HCT116 (cell line): ENCODE measurements at regions of chr1 and their contacts with region 1.

Region 1: GRCh38 chr1:234114648-234115307 is 210.3 kb downstream of the SLC35F3 start:
- DNase-seq: peak; percentile 21
- ATAC-seq: peak; percentile 72
- H3K4me3 ChIP-seq: no peak overlapping the region
- H3K27ac ChIP-seq: no peak overlapping the region
- H3K4me1 ChIP-seq: 0 out of 4 replicates have a peak, but pooled peaks cover 0 to 4% of the 10 kb centered on the region in 2 experiments
- H3K27me3 ChIP-seq: no peaks in the 10 kb centered on the region
- CTCF ChIP-seq: peak; percentile 57 to 78 (median 61); a peak in 5 of 6 replicates
- POLR2A ChIP-seq: no peak
- RAD21 ChIP-seq: peak; percentile 76

Region 2: DNA sequence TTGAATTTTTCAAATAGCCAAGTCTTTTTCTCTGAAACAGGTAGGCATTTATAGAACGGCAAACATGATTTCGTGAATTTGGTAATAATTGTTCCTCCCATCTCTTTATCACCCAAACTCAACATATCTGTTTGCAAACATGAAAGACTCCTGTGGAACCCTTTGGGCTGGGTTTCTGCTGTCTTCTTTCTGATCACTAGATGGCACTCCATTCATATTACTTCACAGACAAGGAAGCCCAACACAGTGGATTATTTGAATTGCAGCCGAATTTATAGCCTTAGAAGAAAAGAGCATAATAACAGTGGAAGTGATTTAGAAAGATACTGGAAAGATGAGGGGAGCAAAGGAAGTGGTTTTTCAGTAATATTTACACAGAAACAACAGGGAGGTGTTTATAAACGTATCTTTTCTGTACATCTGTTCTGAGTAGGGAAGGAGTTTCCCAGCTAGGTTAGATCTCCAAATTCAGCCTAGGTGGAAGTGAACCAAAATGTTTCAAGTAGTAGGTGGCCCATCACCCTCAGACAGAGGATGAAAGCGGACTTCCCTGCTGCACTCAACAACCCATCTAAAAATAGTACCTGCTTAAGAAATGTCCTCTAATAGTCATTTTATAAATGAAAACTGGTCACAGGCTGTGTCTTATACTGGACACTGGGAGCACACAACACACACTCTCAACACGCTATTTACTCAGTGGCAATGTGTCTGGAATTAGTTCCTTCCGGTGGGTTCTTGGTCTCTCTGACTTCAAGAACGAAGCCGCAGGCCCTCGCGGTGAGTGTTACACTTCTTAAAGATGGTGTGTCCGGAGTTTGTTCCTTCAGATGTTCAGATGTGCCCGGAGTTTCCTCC is 719.7 kb before region 1 on chr1:
- CTCF ChIA-PET with region 1: interaction called, 4 read pairs
- POLR2A ChIA-PET with region 1: no interaction called
- RAD21 ChIA-PET with region 1: interaction called in 1 of 2 experiments, 3 read pairs
- intact Hi-C with region 1: loop called (anchors 1 kb)
- DNase-seq: peak; percentile 54
- ATAC-seq: peak; percentile 97
- H3K4me3 ChIP-seq: no peak overlapping the region
- H3K27ac ChIP-seq: no peak overlapping the region
- H3K4me1 ChIP-seq: no peaks in the 10 kb centered on the region
- H3K27me3 ChIP-seq: no peaks in the 10 kb centered on the region
- CTCF ChIP-seq: peak; percentile 86 to 92 (median 86); a peak in 5 of 6 replicates
- POLR2A ChIP-seq: no peak
- RAD21 ChIP-seq: peak; percentile 93

Region 3: DNA sequence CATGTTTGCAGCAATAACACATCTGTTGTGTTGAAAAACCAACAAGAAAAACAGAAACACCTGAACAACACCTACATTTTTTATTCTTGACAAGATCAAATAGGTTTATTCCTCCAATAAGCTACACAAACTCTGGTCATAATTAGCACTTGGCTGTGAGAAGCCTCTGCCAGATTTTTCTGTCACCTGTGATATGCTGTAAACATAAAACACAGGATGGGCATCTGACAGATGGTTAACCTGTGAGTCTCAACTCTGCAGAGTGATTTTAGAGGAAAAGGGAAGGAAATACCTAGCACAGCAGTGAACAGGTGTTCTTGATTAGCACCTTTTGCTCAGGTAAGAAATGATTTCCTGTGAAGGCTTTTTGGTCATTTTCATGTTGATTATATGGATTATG is 83.1 kb after region 1 on chr1:
- CTCF ChIA-PET with region 1: no interaction called
- POLR2A ChIA-PET with region 1: no interaction called
- RAD21 ChIA-PET with region 1: no interaction called
- intact Hi-C with region 1: no loop called
- DNase-seq: no peak
- ATAC-seq: no peak
- H3K4me3 ChIP-seq: no peak overlapping the region
- H3K27ac ChIP-seq: no peak overlapping the region
- H3K4me1 ChIP-seq: peaks cover 0 to under 1% of the 10 kb centered on the region in 2 experiments; a peak in 1 of 4 replicates
- H3K27me3 ChIP-seq: no peaks in the 10 kb centered on the region
- CTCF ChIP-seq: no peak
- POLR2A ChIP-seq: no peak
- RAD21 ChIP-seq: no peak

Region 4: GRCh38 chr1:234309598-234310459 is 195.1 kb after region 1 on chr1:
- CTCF ChIA-PET with region 1: interaction called, 17 read pairs
- POLR2A ChIA-PET with region 1: no interaction called
- RAD21 ChIA-PET with region 1: no interaction called
- intact Hi-C with region 1: loop called (anchors 1 kb)
- DNase-seq: peak; percentile 38
- ATAC-seq: peak; percentile 96
- H3K4me3 ChIP-seq: no peak overlapping the region
- H3K27ac ChIP-seq: no peak overlapping the region
- H3K4me1 ChIP-seq: 0 out of 4 replicates have a peak, but pooled peaks cover 0 to under 1% of the 10 kb centered on the region in 2 experiments
- H3K27me3 ChIP-seq: no peaks in the 10 kb centered on the region
- CTCF ChIP-seq: peak; percentile 77 to 92 (median 91)
- POLR2A ChIP-seq: no peak
- RAD21 ChIP-seq: peak; percentile 75

Region 5: DNA sequence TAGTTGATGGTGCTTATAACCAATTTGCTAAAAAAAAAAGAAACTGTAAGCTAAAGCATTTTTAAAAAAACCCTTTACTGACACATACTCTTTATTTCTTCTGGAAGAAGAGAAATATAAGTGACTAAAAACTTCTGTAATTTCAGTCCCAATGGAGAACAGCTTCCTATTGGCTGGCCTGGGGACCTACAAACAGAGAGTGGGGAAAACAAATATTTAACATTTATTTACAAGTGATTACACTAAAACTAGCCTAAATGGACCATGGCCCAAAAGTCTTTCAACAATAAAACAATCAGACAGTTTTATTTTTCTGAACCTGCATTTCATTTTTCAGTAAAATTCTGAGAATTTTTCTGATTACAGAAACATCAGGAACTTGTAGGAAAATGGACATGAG is 349.0 kb after region 1 on chr1:
- CTCF ChIA-PET with region 1: no interaction called
- POLR2A ChIA-PET with region 1: no interaction called
- RAD21 ChIA-PET with region 1: no interaction called
- intact Hi-C with region 1: no loop called
- DNase-seq: no peak
- ATAC-seq: no peak
- H3K4me3 ChIP-seq: no peak overlapping the region
- H3K27ac ChIP-seq: no peak overlapping the region
- H3K4me1 ChIP-seq: no peaks in the 10 kb centered on the region
- H3K27me3 ChIP-seq: no peaks in the 10 kb centered on the region
- CTCF ChIP-seq: no peak
- POLR2A ChIP-seq: no peak
- RAD21 ChIP-seq: no peak

Region 6: DNA sequence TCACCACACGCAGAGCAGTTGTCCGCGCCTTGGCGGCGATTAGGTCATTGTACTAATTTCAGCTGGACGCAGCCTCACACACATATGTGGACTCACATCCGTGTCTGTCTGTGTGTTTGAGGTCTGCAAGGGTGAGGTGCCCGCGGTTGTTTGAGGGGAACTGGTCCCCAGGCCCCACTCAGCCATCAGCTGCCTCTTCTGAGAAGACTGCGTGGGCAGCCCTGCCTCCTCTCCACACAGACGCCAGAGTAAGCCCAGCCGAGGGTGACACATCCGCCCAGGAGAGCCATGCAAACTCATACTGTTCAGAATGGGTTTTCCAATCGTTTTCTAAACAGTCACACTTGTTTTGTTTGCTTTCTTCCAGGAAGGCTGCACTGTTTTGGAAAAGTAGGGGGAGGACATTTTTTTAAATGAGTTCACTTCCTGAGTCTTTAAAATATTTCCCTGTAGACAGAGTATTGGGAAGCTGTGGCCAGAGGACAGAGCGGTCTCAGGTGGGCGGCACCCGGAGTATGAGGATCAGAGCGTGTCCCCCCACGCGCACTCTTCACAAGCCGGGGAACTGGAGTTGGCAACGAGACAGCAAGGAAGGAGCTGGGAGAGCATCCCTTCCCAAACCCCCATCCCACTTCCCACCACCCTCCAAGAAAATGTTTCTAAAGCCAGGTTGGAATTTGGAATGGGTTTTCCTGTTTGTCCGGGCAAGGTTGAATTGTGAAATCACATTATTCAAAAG is 960.6 kb after region 1 on chr1:
- CTCF ChIA-PET with region 1: no interaction called
- POLR2A ChIA-PET with region 1: no interaction called
- RAD21 ChIA-PET with region 1: no interaction called
- intact Hi-C with region 1: loop called (anchors 10 kb)
- DNase-seq: no peak
- ATAC-seq: no peak
- H3K4me3 ChIP-seq: no peak overlapping the region
- H3K27ac ChIP-seq: no peak overlapping the region
- H3K4me1 ChIP-seq: peaks cover 20 to 53% of the 10 kb centered on the region in 2 experiments
- H3K27me3 ChIP-seq: peaks cover 6% of the 10 kb centered on the region; the same call in 1 of the 2 replicates
- CTCF ChIP-seq: no peak
- POLR2A ChIP-seq: no peak
- RAD21 ChIP-seq: no peak

Region 7: GRCh38 chr1:235783148-235783776 is 1668.5 kb after region 1 on chr1:
- CTCF ChIA-PET with region 1: no interaction called
- POLR2A ChIA-PET with region 1: no interaction called
- RAD21 ChIA-PET with region 1: no interaction called
- intact Hi-C with region 1: loop called (anchors 5 kb)
- DNase-seq: peak; percentile 26
- ATAC-seq: peak; percentile 49
- H3K4me3 ChIP-seq: no peak overlapping the region
- H3K27ac ChIP-seq: no peak overlapping the region
- H3K4me1 ChIP-seq: no peaks in the 10 kb centered on the region
- H3K27me3 ChIP-seq: no peaks in the 10 kb centered on the region
- CTCF ChIP-seq: peak; percentile 23 to 78 (median 29); a peak in 4 of 6 replicates
- POLR2A ChIP-seq: no peak
- RAD21 ChIP-seq: peak; percentile 80